ENCODE measurements at regions of chr4 and their contacts with region 1.

Region 1: DNA sequence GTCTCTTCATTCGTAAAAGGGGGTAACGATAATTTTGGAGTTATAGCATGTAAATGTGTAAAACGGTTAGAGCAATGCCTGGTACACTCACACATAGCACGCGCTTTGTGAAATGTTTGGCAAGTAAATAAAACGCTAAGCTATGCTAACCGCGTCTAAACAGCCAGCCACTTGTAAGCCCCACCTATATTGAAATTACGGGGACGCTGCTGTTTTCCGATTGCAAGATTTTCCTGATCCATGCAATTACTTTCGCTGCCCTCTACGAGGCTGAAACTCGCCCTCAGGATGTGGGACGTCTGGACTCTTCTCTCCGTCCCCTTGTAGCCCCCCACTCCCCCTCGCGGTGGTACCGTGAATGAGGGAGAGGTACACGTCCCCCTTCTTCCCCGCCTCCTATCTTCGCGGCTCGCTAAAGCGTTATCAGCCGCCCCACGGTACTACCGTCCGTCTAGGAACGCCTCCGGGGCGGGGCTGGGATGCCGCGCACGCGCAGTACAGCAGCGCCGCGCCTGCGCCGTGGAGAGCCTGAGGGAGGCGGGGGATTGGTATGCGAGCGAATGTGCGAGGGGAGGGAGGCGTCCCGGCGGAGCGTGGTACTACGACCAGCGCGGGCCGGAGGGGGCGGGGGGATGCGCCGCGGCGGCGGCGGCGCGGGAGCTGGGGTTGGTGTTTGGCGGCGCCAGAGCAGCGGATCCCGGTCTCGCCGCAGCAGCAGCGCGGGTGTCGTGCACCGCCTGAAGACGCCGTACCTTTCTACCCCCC is at the start of gene STIM2:
- DNase-seq: peak; percentile 95 to 100 (median 98)
- ATAC-seq: peak; percentile 56
- H3K4me3 ChIP-seq: peak within 1 kb of the TSS; percentile 82
- H3K4me3 Mint-ChIP-seq: peak within 1 kb of the TSS; percentile 99
- H3K27ac ChIP-seq: peak within 1 kb of the TSS; percentile 71 to 95
- H3K27ac Mint-ChIP-seq: peak within 1 kb of the TSS; percentile 95
- H3K4me1 ChIP-seq: peaks cover 34% of the 10 kb centered on the region
- H3K4me1 Mint-ChIP-seq: peaks cover 62% of the 10 kb centered on the region
- H3K27me3 ChIP-seq: no peaks in the 10 kb centered on the region
- H3K27me3 Mint-ChIP-seq: no peaks in the 10 kb centered on the region
- CTCF ChIP-seq: peak; percentile 45
- total RNA-seq, gene STIM2: 53.7 to 54.9 TPM

Region 2: GRCh38 chr4:25862411-25863346 is 997.7 kb before region 1 on chr4 and contains the start of gene SEL1L3:
- CTCF ChIA-PET with region 1: no interaction called
- POLR2A ChIA-PET with region 1: no interaction called
- intact Hi-C with region 1: loop called in 1 of 2 experiments (anchors 10 kb)
- DNase-seq: peak in 12 of 14 experiments; percentile 30 to 74 (median 49)
- ATAC-seq: peak; percentile 38
- H3K4me3 ChIP-seq: peak within 1 kb of the TSS; percentile 76
- H3K4me3 Mint-ChIP-seq: peak within 1 kb of the TSS; percentile 95
- H3K27ac ChIP-seq: peak within 1 kb of the TSS; percentile 55 to 94
- H3K27ac Mint-ChIP-seq: peak within 1 kb of the TSS; percentile 89
- H3K4me1 ChIP-seq: peaks cover 44% of the 10 kb centered on the region
- H3K4me1 Mint-ChIP-seq: peaks cover 41% of the 10 kb centered on the region
- H3K27me3 ChIP-seq: no peaks in the 10 kb centered on the region
- H3K27me3 Mint-ChIP-seq: no peaks in the 10 kb centered on the region
- CTCF ChIP-seq: no peak
- total RNA-seq, gene SEL1L3: 34.9 to 36.5 TPM

Region 3: DNA sequence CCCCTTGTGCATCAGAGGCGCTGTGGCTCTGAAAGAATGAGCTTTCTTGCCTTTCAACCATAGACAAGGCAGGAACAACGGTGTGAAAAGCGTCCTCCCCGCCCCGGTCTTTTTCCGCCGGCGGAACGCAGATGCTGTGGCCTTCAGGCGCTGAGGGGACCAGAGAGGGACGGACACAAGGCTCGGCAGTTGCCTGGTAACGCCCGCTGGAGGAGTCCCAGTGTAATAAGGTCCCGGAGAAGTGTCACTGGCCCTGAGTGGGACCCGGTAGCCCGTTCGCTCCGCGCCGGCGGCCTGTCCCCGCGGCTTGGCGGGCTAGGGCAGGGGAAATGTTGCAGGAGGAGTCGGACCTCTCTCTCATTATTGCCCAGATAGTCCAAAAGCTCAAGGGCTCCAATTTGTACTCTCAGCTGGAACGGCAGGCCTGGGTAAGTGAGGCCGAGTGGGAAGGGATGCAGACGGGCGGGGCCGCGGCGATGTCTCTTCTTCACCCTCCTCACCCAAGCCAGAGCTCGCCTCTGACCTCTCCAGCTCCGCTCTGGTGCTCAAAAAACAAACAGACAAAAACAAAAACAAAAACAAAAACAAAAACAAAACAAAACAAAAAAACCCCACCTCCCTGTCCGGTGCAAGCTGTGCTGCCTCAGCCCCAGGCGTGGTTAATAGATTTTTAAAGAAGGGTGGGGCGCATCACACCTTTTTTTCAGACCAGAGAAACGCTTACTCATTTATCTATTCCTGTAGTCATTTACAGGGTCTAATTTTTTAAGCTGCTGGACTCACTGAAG is 276.3 kb before region 1 on chr4 and contains the start of gene TBC1D19:
- CTCF ChIA-PET with region 1: interaction called, 3 read pairs
- POLR2A ChIA-PET with region 1: interaction called, 29 read pairs
- intact Hi-C with region 1: loop called (anchors 5 to 10 kb)
- DNase-seq: peak; percentile 78 to 93 (median 86)
- ATAC-seq: peak; percentile 87
- H3K4me3 ChIP-seq: peak within 1 kb of the TSS; percentile 76
- H3K4me3 Mint-ChIP-seq: peak within 1 kb of the TSS; percentile 96
- H3K27ac ChIP-seq: peak within 1 kb of the TSS; percentile 81 to 85
- H3K27ac Mint-ChIP-seq: peak within 1 kb of the TSS; percentile 95
- H3K4me1 ChIP-seq: peaks cover 11% of the 10 kb centered on the region
- H3K4me1 Mint-ChIP-seq: peaks cover 28% of the 10 kb centered on the region
- H3K27me3 ChIP-seq: no peaks in the 10 kb centered on the region
- H3K27me3 Mint-ChIP-seq: peaks cover 3% of the 10 kb centered on the region
- CTCF ChIP-seq: no peak
- total RNA-seq, gene TBC1D19: 4.0 to 4.8 TPM

Region 4: GRCh38 chr4:26885912-26886274 is 25.6 kb after region 1 on chr4:
- CTCF ChIA-PET with region 1: interaction called, 9 read pairs
- POLR2A ChIA-PET with region 1: interaction called, 274 read pairs
- intact Hi-C with region 1: loop called (anchors 1 to 2 kb)
- DNase-seq: peak in 6 of 14 experiments; percentile 10 to 92 (median 60)
- ATAC-seq: peak; percentile 76
- H3K4me3 ChIP-seq: peak overlapping the region; percentile 40
- H3K4me3 Mint-ChIP-seq: peak overlapping the region; percentile 72
- H3K27ac ChIP-seq: peak overlapping the region; percentile 63 to 89
- H3K27ac Mint-ChIP-seq: peak overlapping the region; percentile 92
- H3K4me1 ChIP-seq: peaks cover 25% of the 10 kb centered on the region
- H3K4me1 Mint-ChIP-seq: peaks cover 80% of the 10 kb centered on the region
- H3K27me3 ChIP-seq: no peaks in the 10 kb centered on the region
- H3K27me3 Mint-ChIP-seq: no peaks in the 10 kb centered on the region
- CTCF ChIP-seq: no peak

Region 5: GRCh38 chr4:26936284-26937065 is 76.1 kb after region 1 on chr4:
- CTCF ChIA-PET with region 1: interaction called, 3 read pairs
- POLR2A ChIA-PET with region 1: interaction called, 10 read pairs
- intact Hi-C with region 1: no loop called
- DNase-seq: peak in 2 of 14 experiments; percentile 14 to 35
- ATAC-seq: peak; percentile 44
- H3K4me3 ChIP-seq: no peak overlapping the region
- H3K4me3 Mint-ChIP-seq: peak overlapping the region; percentile 5
- H3K27ac ChIP-seq: no peak overlapping the region
- H3K27ac Mint-ChIP-seq: peak overlapping the region; percentile 48
- H3K4me1 ChIP-seq: peaks cover 12% of the 10 kb centered on the region
- H3K4me1 Mint-ChIP-seq: peaks cover 86% of the 10 kb centered on the region
- H3K27me3 ChIP-seq: no peaks in the 10 kb centered on the region
- H3K27me3 Mint-ChIP-seq: no peaks in the 10 kb centered on the region
- CTCF ChIP-seq: no peak

Region 6: GRCh38 chr4:27000820-27001219 is 140.5 kb after region 1 on chr4:
- CTCF ChIA-PET with region 1: interaction called, 7 read pairs
- POLR2A ChIA-PET with region 1: interaction called, 21 read pairs
- intact Hi-C with region 1: loop called (anchors 5 kb)
- DNase-seq: peak in 4 of 14 experiments; percentile 10 to 57 (median 51)
- ATAC-seq: peak; percentile 87
- H3K4me3 ChIP-seq: no peak overlapping the region
- H3K4me3 Mint-ChIP-seq: no peak overlapping the region
- H3K27ac ChIP-seq: no peak overlapping the region
- H3K27ac Mint-ChIP-seq: peak overlapping the region; percentile 50
- H3K4me1 ChIP-seq: peaks cover 11% of the 10 kb centered on the region
- H3K4me1 Mint-ChIP-seq: peaks cover 51% of the 10 kb centered on the region
- H3K27me3 ChIP-seq: no peaks in the 10 kb centered on the region
- H3K27me3 Mint-ChIP-seq: no peaks in the 10 kb centered on the region
- CTCF ChIP-seq: peak; percentile 56